Endothelial cell of umbilical vein (primary cell): ENCODE measurements at regions of chr15 and their contacts with region 1.

Region 1: DNA sequence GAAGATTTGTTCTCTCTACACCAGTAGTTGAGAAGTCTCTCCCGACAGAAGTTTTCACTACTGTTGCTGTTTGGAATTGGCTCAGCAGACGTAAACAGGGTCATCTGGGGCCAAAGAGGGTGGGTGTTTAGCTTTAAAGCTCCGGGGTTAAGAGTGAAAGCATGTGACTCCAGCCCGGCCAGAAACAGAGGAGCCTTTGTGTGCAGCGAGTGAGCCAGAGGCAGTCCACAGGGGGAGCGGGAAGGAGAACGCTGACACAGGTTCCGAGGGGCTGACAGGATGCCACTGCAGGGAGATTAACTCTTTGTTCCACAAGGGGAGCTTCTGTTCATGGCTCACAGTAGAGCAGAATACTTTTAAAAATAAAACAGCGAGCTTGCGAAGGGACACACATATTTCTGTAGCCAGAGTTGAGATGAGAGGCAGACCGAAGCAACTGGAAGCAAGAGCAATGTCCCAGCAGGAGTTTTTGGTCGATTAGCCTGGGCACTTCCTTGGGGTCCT is 26.9 kb downstream of the BMF start:
- DNase-seq: peak; percentile 92
- H3K4me3 ChIP-seq: peak overlapping the region in 1 of 3 experiments; percentile 47
- H3K27ac ChIP-seq: peak overlapping the region; percentile 81
- H3K4me1 ChIP-seq: peaks cover 28% of the 10 kb centered on the region
- H3K27me3 ChIP-seq: no peaks in the 10 kb centered on the region
- CTCF ChIP-seq: no peak
- POLR2A ChIP-seq: peak; percentile 67

Region 2: DNA sequence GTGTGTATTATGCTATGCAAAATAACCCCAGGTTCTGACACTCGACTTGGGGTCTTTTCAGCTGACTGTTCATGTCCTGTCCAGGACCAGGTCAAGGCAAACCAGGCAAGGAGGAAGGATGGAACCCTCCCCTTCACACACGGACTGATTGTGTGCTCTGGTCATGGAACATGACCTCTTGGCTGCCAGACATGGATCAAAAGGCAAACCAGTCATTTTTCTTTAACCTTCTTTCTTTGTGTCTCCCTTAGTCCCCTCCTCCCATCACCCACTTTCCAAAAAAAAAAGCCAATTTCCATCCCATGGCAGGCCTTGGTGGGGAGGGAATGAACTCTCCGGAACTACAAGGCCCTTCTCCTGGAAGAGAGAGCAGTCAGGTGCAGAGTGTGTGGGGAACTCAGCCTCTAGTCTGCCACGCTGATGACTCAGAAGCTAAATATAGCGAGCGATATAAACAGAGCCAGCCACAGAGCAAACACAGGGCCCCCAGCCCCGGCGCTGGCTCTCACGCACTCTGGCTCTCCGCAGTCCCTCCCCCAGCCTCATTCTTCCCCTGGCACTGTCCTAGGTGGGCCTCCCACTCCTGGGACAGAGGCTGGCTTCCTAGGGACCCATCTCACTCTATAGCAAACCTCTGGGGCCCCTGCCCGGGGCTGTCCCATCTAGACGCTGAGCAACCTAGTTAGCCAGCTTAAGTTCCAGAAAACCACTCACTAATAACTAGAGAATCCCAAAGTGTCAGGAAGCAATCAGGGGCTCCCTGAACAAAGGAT is 16.9 kb after region 1 on chr15:
- CTCF ChIA-PET with region 1: interaction called, 12 read pairs
- POLR2A ChIA-PET with region 1: interaction called, 6 read pairs
- dilution Hi-C with region 1: no loop called
- intact Hi-C with region 1: loop called (anchors 1 kb)
- DNase-seq: peak; percentile 97
- H3K4me3 ChIP-seq: no peak overlapping the region
- H3K27ac ChIP-seq: peak overlapping the region; percentile 91
- H3K4me1 ChIP-seq: peaks cover 46% of the 10 kb centered on the region
- H3K27me3 ChIP-seq: no peaks in the 10 kb centered on the region
- CTCF ChIP-seq: no peak
- POLR2A ChIP-seq: no peak

Region 3: GRCh38 chr15:40121911-40122638 is 40.3 kb after region 1 on chr15:
- CTCF ChIA-PET with region 1: no interaction called
- POLR2A ChIA-PET with region 1: no interaction called
- dilution Hi-C with region 1: no loop called
- intact Hi-C with region 1: no loop called
- DNase-seq: no peak
- H3K4me3 ChIP-seq: no peak overlapping the region
- H3K27ac ChIP-seq: no peak overlapping the region
- H3K4me1 ChIP-seq: no peaks in the 10 kb centered on the region
- H3K27me3 ChIP-seq: peaks cover 9 to 15% of the 10 kb centered on the region in 2 experiments
- CTCF ChIP-seq: no peak
- POLR2A ChIP-seq: no peak

Region 4: DNA sequence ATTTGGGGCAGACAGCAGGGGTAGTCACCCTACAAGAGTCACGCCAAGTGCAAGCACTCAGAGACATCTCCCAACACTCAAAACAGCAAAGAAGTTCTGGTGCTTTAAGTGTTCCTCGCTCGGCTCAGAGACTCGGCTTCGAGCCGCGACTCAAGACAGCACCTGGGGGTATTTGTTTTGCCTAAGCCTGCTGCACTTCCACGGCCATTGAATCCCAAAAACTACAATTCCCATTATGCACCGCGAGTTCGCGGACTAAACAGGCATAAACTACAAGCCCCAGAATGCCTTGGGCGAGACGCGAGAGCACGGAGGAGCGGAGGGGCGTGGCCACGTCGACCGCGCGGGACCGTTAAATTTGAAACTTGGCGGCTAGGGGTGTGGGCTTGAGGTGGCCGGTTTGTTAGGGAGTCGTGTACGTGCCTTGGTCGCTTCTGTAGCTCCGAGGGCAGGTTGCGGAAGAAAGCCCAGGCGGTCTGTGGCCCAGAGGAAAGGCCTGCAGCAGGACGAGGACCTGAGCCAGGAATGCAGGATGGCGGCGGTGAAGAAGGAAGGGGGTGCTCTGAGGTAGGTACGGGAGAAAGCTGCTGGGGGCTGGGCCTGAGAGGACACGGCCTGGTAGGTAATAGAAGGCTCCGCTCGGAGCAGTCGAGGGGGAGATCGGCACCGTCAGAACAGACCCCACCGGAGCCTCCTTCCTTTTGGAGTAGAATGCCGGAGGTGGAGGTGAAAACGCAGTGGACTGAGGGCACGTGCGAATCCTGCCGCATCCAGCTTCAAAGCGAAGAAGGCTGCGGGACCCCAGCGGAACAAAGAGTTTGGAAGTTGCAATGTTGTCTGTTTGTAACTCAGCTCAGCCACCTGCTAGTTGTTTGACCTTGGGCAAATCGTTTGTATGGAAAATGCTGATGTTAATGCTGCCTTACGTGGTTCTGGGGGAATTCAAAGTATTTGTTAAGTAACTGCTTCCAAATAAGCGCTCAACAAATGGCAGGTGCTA is 79.2 kb after region 1 on chr15 and contains the start of gene BUB1B:
- CTCF ChIA-PET with region 1: no interaction called
- POLR2A ChIA-PET with region 1: interaction called, 10 read pairs
- dilution Hi-C with region 1: no loop called
- intact Hi-C with region 1: no loop called
- DNase-seq: peak; percentile 96
- H3K4me3 ChIP-seq: peak within 1 kb of the TSS; percentile 67 to 92 (median 71)
- H3K27ac ChIP-seq: peak within 1 kb of the TSS; percentile 24
- H3K4me1 ChIP-seq: peaks cover 15% of the 10 kb centered on the region
- H3K27me3 ChIP-seq: peaks cover 3 to 4% of the 10 kb centered on the region in 2 experiments
- CTCF ChIP-seq: no peak
- POLR2A ChIP-seq: peak; percentile 39
- total RNA-seq, gene BUB1B: 65.6 and 69.8 TPM in 2 replicates